ENCODE measurements at regions of chr6 and their contacts with region 1.

Region 1: GRCh38 chr6:56693246-56693607 is 50.5 kb upstream of the DST start:
- DNase-seq: peak; percentile 89
- H3K4me3 ChIP-seq: peak overlapping the region; percentile 28
- H3K27me3 ChIP-seq: no peaks in the 10 kb centered on the region
- CTCF ChIP-seq: no peak

Region 2: GRCh38 chr6:56624046-56624727 is 69.0 kb before region 1 on chr6:
- CTCF ChIA-PET with region 1: no interaction called
- POLR2A ChIA-PET with region 1: interaction called, 12 read pairs
- DNase-seq: no peak
- H3K4me3 ChIP-seq: no peak overlapping the region
- H3K27me3 ChIP-seq: no peaks in the 10 kb centered on the region
- CTCF ChIP-seq: no peak

Region 3: DNA sequence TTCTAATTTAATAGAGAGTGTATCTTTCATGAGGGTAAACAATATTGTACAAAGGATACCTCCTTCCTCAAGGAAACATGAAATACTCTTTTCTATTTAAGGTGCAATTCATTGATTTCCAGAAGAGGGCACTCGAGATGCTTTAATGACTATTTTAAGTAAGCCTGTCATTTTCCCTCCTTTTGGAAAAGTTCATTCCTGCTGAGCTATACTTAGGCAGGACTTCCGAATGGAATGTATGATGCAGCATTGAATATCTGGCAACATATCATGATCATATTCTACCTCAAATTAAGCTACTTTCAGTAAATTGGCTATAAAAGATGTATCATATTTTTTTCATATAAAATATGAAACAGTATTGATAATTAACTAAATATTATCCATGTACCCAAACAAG is 55.6 kb before region 1 on chr6:
- CTCF ChIA-PET with region 1: interaction called, 20 read pairs
- POLR2A ChIA-PET with region 1: interaction called, 3 read pairs
- DNase-seq: no peak
- H3K4me3 ChIP-seq: no peak overlapping the region
- H3K27me3 ChIP-seq: no peaks in the 10 kb centered on the region
- CTCF ChIP-seq: peak; percentile 54

Region 4: DNA sequence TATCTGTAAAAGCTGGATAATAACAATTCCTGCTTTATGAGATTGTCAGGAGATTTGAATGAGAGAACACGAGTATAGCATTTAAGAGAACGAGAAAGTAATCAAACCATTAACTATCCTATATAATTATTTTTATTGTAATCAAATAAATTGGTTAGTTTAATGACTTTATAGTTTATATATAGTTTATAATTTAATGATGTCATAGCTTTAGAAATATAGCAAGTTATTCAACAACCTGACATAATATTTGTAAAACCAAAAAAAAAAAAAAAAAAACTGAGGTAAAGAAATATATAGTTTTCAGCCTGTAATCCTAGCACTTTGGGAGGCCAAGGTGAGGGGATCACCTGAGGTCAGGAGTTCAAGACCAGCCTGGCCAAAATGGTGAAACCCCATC is 24.2 kb before region 1 on chr6:
- CTCF ChIA-PET with region 1: interaction called, 3 read pairs
- POLR2A ChIA-PET with region 1: interaction called, 15 read pairs
- DNase-seq: no peak
- H3K4me3 ChIP-seq: no peak overlapping the region
- H3K27me3 ChIP-seq: no peaks in the 10 kb centered on the region
- CTCF ChIP-seq: no peak

Region 5: DNA sequence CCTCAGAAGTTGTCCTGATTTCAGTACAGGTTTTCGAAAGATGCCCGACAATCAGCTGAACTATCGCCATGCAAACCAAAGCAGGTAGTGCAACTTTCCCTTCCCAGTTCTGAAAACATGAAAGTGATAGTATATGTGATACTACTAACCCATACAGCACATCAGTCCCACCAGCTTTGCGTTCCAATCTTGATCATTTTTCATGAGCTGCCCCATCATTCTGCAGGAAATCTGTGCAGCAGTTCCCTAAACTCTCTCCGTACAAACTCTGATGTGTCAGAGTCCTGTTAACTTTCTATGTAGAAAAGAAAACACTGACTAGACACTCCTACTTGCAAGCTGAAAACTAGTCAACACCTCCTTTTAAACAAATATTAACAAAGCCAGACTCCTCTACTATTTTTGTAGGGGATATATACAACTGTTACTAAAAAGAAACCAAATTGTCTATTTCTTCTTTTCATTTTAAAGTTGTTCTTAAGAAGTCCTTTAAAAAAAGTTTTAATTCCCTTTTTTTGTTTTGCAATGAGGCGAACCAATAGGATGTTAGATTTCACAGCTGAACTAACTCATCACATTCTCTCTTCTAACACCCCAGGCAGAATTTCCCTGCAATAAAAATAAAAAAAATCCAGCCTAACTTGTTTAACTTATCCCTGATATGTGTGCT is 49.0 kb after region 1 on chr6:
- CTCF ChIA-PET with region 1: no interaction called
- POLR2A ChIA-PET with region 1: interaction called, 14 read pairs
- DNase-seq: no peak
- H3K4me3 ChIP-seq: no peak overlapping the region
- H3K27me3 ChIP-seq: no peaks in the 10 kb centered on the region
- CTCF ChIP-seq: no peak

Region 6: DNA sequence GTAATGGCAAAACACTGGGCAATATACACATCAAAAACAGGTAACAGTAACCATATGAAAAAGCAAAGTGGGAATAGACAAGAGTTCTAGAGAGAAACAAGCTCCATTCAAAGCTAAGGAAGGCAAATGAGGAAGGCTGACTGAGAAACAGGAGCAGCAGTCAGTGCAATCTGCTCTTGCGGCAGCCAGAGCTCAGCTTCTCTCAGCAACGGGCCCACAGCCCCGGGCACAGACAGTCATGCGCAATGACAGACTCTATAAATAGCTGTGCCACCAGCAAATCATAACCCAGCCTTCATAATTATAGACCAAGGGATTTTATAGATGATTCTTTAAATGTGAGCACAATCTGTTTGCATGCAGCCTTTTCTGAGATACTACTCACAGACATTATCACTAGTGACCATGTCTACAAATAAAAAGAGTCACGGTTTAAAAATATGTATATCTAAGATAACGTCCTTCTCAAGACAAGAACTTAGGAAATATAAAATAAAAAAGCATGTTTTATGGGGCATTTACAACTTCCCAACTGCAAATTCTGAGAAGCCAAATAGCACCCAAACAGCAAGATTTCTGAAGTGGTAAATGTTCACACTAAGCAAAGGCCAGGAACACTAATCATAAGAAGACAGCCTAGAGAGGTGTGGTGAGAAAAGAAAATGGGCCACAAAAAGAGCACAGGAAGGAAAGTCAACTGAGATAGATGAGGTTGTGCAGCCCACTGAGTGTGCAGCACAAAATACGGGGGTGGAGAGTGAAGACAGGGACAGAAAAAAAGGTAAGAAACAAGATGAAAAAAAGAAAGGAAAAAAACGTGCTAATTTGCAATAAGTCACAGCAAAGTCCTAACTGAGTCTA is 221.8 kb after region 1 on chr6:
- CTCF ChIA-PET with region 1: no interaction called
- POLR2A ChIA-PET with region 1: no interaction called
- DNase-seq: no peak
- H3K4me3 ChIP-seq: no peak overlapping the region
- H3K27me3 ChIP-seq: no peaks in the 10 kb centered on the region
- CTCF ChIP-seq: no peak

Region 7: DNA sequence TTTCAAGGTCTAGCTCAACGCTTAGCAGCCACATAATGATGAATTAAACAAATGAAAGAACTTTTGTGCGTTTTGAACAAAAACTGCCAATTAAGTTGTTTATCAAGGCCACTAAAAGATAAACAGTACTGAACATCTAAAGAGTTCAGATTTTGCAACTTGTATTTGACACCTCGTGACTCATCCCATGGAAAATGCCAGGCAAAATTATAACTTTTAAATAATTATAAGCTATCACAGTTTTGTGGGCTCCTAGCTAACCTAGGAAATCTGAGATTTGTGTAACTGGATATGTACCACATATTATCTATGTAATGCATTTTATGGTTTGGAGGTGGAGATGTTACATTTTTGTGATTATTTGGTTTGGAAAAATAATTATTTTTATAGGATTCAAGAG is 469.3 kb after region 1 on chr6:
- CTCF ChIA-PET with region 1: no interaction called
- POLR2A ChIA-PET with region 1: no interaction called
- DNase-seq: no peak
- H3K4me3 ChIP-seq: no peak overlapping the region
- H3K27me3 ChIP-seq: no peaks in the 10 kb centered on the region
- CTCF ChIP-seq: no peak

Measured in BJ (cell line).